Activated CD8-positive, alpha-beta memory T cell treated with anti-CD3 and anti-CD28 coated beads, Interleukin-2, amount 10 ng/mL, durations not matched to agents 7 days and 5 days (primary cell): ENCODE measurements at regions of chr10 and their contacts with region 1.

Region 1: DNA sequence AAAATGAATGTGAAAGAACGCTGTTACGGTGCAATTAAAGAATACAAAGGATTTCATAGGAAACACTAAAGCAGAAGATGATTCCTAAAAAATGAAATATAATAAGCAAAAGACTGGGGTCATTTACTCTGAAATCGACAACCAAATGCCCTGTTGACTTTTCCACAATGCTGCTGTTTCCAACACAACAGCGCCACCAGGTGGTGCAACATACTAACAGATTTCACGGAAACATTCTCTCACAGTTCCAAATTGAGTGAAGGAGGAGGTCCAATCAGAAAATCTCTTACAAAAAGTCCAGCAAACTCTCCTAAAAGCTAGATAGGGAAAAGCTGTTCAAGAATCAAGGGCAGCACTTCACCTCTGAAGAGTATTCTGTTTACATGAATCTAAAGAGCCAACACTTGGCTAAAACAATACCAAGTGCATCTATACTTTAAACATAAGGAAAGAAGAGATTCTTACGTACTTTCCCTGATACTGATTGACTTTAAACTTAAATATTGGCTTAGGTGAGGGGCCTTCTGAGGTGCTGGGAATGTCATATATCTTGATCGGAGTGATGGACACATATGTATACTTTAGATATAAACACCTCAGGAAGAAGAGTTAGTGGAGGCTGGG is 55.9 kb downstream of the UPF2 start:
- DNase-seq: peak; percentile 81
- ATAC-seq: peak; percentile 64
- H3K4me3 Mint-ChIP-seq: no peak overlapping the region
- H3K27ac Mint-ChIP-seq: peak overlapping the region; percentile 58
- H3K4me1 Mint-ChIP-seq: peaks cover 6% of the 10 kb centered on the region
- H3K27me3 Mint-ChIP-seq: no peaks in the 10 kb centered on the region

Region 2: GRCh38 chr10:11782793-11783557 is 203.7 kb before region 1 on chr10:
- CTCF ChIA-PET with region 1: interaction called, 25 read pairs
- DNase-seq: no peak
- ATAC-seq: peak; percentile 60
- H3K4me3 Mint-ChIP-seq: no peak overlapping the region
- H3K27ac Mint-ChIP-seq: no peak overlapping the region
- H3K4me1 Mint-ChIP-seq: peaks cover 4% of the 10 kb centered on the region
- H3K27me3 Mint-ChIP-seq: peaks cover 27% of the 10 kb centered on the region

Region 3: GRCh38 chr10:11975795-11976194 is 10.9 kb before region 1 on chr10:
- CTCF ChIA-PET with region 1: interaction called, 10 read pairs
- DNase-seq: no peak
- ATAC-seq: no peak
- H3K4me3 Mint-ChIP-seq: no peak overlapping the region
- H3K27ac Mint-ChIP-seq: no peak overlapping the region
- H3K4me1 Mint-ChIP-seq: no peaks in the 10 kb centered on the region
- H3K27me3 Mint-ChIP-seq: no peaks in the 10 kb centered on the region

Region 4: GRCh38 chr10:12006671-12007070 is 20.0 kb after region 1 on chr10:
- CTCF ChIA-PET with region 1: no interaction called
- DNase-seq: no peak
- ATAC-seq: no peak
- H3K4me3 Mint-ChIP-seq: no peak overlapping the region
- H3K27ac Mint-ChIP-seq: no peak overlapping the region
- H3K4me1 Mint-ChIP-seq: peaks cover 2% of the 10 kb centered on the region
- H3K27me3 Mint-ChIP-seq: no peaks in the 10 kb centered on the region